ENCODE measurements at regions of chr9 and their contacts with region 1.

Region 1: GRCh38 chr9:35116898-35117551 is 1.4 kb upstream of the ATOSB start:
- DNase-seq: peak; percentile 86 to 93
- ATAC-seq: peak; percentile 84 to 91 (median 86)
- H3K4me3 ChIP-seq: peak overlapping the region; percentile 68
- H3K27ac ChIP-seq: peak overlapping the region; percentile 75
- H3K4me1 ChIP-seq: peaks cover 10% of the 10 kb centered on the region
- H3K27me3 ChIP-seq: no peaks in the 10 kb centered on the region
- CTCF ChIP-seq: peak; percentile 96

Region 2: GRCh38 chr9:34603610-34604231 is 513.3 kb before region 1 on chr9:
- intact Hi-C with region 1: no loop called
- DNase-seq: peak; percentile 82 to 92
- ATAC-seq: peak; percentile 91 to 96 (median 94)
- H3K4me3 ChIP-seq: no peak overlapping the region
- H3K27ac ChIP-seq: no peak overlapping the region
- H3K4me1 ChIP-seq: peaks cover 6% of the 10 kb centered on the region
- H3K27me3 ChIP-seq: no peaks in the 10 kb centered on the region
- CTCF ChIP-seq: peak; percentile 92

Region 3: DNA sequence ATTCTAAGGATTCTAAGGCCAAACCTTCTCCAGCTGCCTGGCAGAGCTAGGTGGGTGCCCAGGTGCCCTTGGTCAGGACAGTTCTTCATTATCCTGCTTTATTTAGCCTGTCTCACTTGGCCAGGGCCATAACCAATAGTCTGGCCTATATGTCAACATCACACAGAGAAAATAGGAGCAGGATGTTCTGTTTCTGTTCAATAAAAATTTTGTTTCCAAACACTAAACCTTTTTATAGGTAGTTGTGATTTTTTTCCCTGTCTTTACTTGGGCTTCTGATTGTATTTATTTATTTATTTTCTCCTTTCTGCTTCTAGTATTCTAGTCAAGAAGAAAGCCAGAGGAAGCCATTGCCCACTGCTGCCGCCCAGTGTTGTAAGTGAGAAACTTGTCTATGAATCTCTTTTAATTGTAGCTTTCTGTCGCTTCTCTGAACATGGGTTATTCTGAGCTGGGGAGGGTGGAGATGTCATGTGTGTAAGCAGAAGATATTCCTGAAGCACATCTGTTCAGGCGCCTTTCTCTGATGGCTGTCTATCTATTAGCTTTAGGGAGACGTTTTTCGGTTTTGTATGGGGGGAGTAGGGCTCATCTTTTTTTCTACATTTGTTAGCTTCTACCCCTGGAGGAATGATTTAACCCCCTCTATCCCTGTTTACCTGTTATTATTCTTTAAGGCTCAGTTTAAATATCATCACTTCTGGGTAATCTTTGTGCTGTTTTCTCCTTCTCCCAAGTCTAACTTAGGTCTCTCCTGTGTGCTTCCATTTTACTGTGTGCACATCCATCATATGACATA is 141.8 kb after region 1 on chr9:
- intact Hi-C with region 1: loop called (anchors 1 to 5 kb)
- DNase-seq: peak; percentile 68 to 79
- ATAC-seq: peak; percentile 61 to 92 (median 74)
- H3K4me3 ChIP-seq: no peak overlapping the region
- H3K27ac ChIP-seq: no peak overlapping the region
- H3K4me1 ChIP-seq: peaks cover 11% of the 10 kb centered on the region
- H3K27me3 ChIP-seq: no peaks in the 10 kb centered on the region
- CTCF ChIP-seq: peak; percentile 77

Region 4: DNA sequence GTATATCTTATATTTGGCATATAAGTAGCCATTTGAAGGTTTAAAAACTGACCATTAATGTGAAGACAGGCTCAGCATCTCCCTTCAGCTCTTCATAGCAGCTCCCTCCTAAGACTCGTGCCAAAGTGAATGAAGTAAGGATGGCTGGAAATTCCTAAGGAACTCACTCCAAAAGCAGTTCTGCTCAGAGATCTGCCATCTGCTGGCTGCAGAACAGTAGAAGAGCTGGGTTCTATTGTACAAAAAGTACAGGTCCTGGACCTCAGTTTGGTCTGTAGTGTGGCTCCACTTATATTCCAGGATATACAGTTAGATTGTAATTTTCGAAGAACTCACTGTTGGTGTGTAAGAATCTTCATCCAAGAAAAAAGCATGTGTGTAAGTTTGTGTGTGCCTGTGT is 268.0 kb after region 1 on chr9:
- intact Hi-C with region 1: loop called (anchors 10 kb)
- DNase-seq: no peak
- ATAC-seq: peak in 2 of 4 donors; percentile 59
- H3K4me3 ChIP-seq: no peak overlapping the region
- H3K27ac ChIP-seq: no peak overlapping the region
- H3K4me1 ChIP-seq: no peaks in the 10 kb centered on the region
- H3K27me3 ChIP-seq: no peaks in the 10 kb centered on the region
- CTCF ChIP-seq: peak; percentile 28

Region 5: DNA sequence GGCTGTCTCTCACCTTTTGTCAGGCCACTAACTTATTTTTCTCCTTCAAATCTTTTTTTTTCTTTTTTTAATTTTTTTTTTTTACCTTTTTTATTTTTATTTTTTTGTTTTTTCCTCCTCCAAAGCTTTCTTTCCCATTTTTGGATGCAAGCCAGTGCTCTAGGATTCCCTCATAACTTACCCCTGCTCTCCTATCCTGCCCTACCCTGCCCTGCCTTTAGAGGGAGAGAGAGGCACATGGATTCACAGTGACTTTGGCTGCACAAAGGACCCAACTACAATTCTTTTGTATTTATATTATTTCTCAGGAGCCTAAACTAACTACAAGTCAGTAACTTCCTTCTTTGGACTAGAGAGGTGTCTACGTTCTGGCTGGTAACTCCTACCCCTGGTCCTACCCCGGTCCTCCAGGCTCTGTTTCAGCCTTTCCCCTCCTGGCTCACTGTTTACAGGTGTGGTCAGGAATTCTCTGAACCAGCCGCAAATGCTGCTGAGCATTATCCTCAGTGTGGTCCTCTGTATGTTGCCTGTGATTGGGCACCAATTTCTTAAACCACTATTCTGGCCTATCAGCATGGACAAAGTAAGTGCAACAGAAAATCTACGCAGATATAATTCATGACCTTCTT is 364.4 kb after region 1 on chr9:
- intact Hi-C with region 1: loop called (anchors 1 to 5 kb)
- DNase-seq: peak in 1 of 2 donors; percentile 41
- ATAC-seq: peak; percentile 83 to 86 (median 85)
- H3K4me3 ChIP-seq: no peak overlapping the region
- H3K27ac ChIP-seq: no peak overlapping the region
- H3K4me1 ChIP-seq: no peaks in the 10 kb centered on the region
- H3K27me3 ChIP-seq: no peaks in the 10 kb centered on the region
- CTCF ChIP-seq: peak; percentile 79